Breast epithelium (tissue), 4 donors: ENCODE measurements at regions of chr11 and their contacts with region 1.

Region 1: DNA sequence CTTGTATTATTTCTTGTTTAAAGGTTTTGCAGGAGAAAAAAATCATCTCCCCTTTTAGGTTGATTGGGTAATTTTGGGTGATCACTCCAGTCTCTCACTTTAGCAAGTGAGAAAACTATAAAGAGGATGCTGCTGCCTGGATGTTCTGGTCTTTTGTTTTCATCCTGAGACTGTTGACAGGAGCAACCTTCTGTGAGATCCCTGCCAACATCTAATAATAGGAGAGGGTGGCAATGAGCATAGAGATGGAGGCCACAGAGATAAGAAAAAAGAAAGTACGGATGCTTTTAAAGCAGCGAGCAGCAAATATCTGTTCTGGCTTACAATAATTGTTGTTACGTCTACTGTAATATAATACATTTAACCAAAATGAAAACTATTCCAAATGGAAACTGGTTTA is 293.6 kb upstream of the MTNR1B start:
- DNase-seq: no peak
- H3K4me3 ChIP-seq: no peak overlapping the region
- H3K27ac ChIP-seq: no peak overlapping the region
- H3K4me1 ChIP-seq: no peaks in the 10 kb centered on the region
- H3K27me3 ChIP-seq: no peaks in the 10 kb centered on the region
- CTCF ChIP-seq: no peak
- POLR2A ChIP-seq: no peak

Region 2: GRCh38 chr11:92692826-92693546 is 17.2 kb after region 1 on chr11:
- intact Hi-C with region 1: loop called (anchors 1 kb)
- DNase-seq: no peak
- H3K4me3 ChIP-seq: no peak overlapping the region
- H3K27ac ChIP-seq: no peak overlapping the region
- H3K4me1 ChIP-seq: no peaks in the 10 kb centered on the region
- H3K27me3 ChIP-seq: no peaks in the 10 kb centered on the region
- CTCF ChIP-seq: no peak
- POLR2A ChIP-seq: no peak

Region 3: GRCh38 chr11:93054881-93055280 is 379.1 kb after region 1 on chr11:
- intact Hi-C with region 1: no loop called
- DNase-seq: no peak
- H3K4me3 ChIP-seq: no peak overlapping the region
- H3K27ac ChIP-seq: no peak overlapping the region
- H3K4me1 ChIP-seq: no peaks in the 10 kb centered on the region
- H3K27me3 ChIP-seq: no peaks in the 10 kb centered on the region
- CTCF ChIP-seq: no peak
- POLR2A ChIP-seq: no peak